CD8-positive, alpha-beta T cell (primary cell): ENCODE measurements at regions of chr17 and their contacts with region 1.

Region 1: GRCh38 chr17:74659898-74660297 is 36.4 kb upstream of the CD300E start:
- DNase-seq: no peak
- ATAC-seq: no peak
- H3K4me3 ChIP-seq: no peak overlapping the region
- H3K4me3 Mint-ChIP-seq: no peak overlapping the region
- H3K27ac ChIP-seq: no peak overlapping the region
- H3K27ac Mint-ChIP-seq: no peak overlapping the region
- H3K4me1 ChIP-seq: no peaks in the 10 kb centered on the region
- H3K4me1 Mint-ChIP-seq: peaks cover 6% of the 10 kb centered on the region
- H3K27me3 ChIP-seq: peaks cover 0 to 8% of the 10 kb centered on the region in 2 experiments
- H3K27me3 Mint-ChIP-seq: peaks cover 39% of the 10 kb centered on the region
- CTCF ChIP-seq: no peak

Region 2: DNA sequence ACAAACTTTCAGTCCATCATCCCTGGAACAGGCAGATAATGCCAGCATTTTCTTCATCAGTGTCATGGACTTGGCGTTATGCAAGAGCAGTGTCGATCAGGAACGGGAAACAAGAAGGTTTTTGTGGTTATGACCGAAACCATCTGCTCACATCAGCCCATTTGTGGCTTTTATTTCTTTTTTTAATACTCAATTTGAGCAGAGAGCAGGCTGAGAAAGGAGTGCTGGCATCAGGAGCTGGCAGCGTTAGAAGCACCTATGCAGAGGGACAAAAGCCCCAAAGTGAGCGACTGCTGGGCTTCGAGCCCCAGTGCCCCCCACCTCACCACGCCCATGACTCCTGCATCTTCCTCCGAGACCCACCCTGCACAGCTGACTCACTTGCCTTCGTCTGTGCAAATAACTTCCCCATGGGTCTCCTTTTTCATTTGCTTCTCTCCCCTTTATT is 20.2 kb before region 1 on chr17:
- CTCF ChIA-PET with region 1: interaction called, 10 read pairs
- POLR2A ChIA-PET with region 1: no interaction called
- intact Hi-C with region 1: no loop called
- DNase-seq: peak in 1 of 9 experiments; percentile 30
- ATAC-seq: no peak
- H3K4me3 ChIP-seq: no peak overlapping the region
- H3K4me3 Mint-ChIP-seq: no peak overlapping the region
- H3K27ac ChIP-seq: no peak overlapping the region
- H3K27ac Mint-ChIP-seq: no peak overlapping the region
- H3K4me1 ChIP-seq: peaks cover 10% of the 10 kb centered on the region
- H3K4me1 Mint-ChIP-seq: peaks cover 7% of the 10 kb centered on the region
- H3K27me3 ChIP-seq: peaks cover 2 to 11% of the 10 kb centered on the region in 2 experiments
- H3K27me3 Mint-ChIP-seq: peaks cover 34% of the 10 kb centered on the region
- CTCF ChIP-seq: no peak

Region 3: GRCh38 chr17:74677558-74678466 is 17.9 kb after region 1 on chr17:
- CTCF ChIA-PET with region 1: interaction called, 48 read pairs
- POLR2A ChIA-PET with region 1: interaction called, 4 read pairs
- intact Hi-C with region 1: no loop called
- DNase-seq: no peak
- ATAC-seq: no peak
- H3K4me3 ChIP-seq: no peak overlapping the region
- H3K4me3 Mint-ChIP-seq: peak overlapping the region; percentile 2
- H3K27ac ChIP-seq: no peak overlapping the region
- H3K27ac Mint-ChIP-seq: peak overlapping the region; percentile 28
- H3K4me1 ChIP-seq: peaks cover 15% of the 10 kb centered on the region
- H3K4me1 Mint-ChIP-seq: peaks cover 20% of the 10 kb centered on the region
- H3K27me3 ChIP-seq: peaks cover 0 to 8% of the 10 kb centered on the region in 2 experiments
- H3K27me3 Mint-ChIP-seq: peaks cover 21% of the 10 kb centered on the region
- CTCF ChIP-seq: no peak

Region 4: GRCh38 chr17:74736513-74737298 is 76.8 kb after region 1 on chr17 and contains the start of gene RAB37:
- CTCF ChIA-PET with region 1: interaction called, 254 read pairs
- POLR2A ChIA-PET with region 1: interaction called, 37 read pairs
- intact Hi-C with region 1: loop called (anchors 1 kb)
- DNase-seq: peak in 8 of 9 experiments; percentile 43 to 81 (median 62)
- ATAC-seq: peak; percentile 30
- H3K4me3 ChIP-seq: peak within 1 kb of the TSS; percentile 65 to 85
- H3K4me3 Mint-ChIP-seq: peak within 1 kb of the TSS; percentile 91
- H3K27ac ChIP-seq: peak within 1 kb of the TSS; percentile 47 to 55
- H3K27ac Mint-ChIP-seq: peak within 1 kb of the TSS; percentile 93
- H3K4me1 ChIP-seq: peaks cover 42% of the 10 kb centered on the region
- H3K4me1 Mint-ChIP-seq: peaks cover 51% of the 10 kb centered on the region
- H3K27me3 ChIP-seq: no peaks in the 10 kb centered on the region
- H3K27me3 Mint-ChIP-seq: no peaks in the 10 kb centered on the region
- CTCF ChIP-seq: peak; percentile 58
- total RNA-seq, gene RAB37: 33.7 to 36.0 TPM

Region 5: DNA sequence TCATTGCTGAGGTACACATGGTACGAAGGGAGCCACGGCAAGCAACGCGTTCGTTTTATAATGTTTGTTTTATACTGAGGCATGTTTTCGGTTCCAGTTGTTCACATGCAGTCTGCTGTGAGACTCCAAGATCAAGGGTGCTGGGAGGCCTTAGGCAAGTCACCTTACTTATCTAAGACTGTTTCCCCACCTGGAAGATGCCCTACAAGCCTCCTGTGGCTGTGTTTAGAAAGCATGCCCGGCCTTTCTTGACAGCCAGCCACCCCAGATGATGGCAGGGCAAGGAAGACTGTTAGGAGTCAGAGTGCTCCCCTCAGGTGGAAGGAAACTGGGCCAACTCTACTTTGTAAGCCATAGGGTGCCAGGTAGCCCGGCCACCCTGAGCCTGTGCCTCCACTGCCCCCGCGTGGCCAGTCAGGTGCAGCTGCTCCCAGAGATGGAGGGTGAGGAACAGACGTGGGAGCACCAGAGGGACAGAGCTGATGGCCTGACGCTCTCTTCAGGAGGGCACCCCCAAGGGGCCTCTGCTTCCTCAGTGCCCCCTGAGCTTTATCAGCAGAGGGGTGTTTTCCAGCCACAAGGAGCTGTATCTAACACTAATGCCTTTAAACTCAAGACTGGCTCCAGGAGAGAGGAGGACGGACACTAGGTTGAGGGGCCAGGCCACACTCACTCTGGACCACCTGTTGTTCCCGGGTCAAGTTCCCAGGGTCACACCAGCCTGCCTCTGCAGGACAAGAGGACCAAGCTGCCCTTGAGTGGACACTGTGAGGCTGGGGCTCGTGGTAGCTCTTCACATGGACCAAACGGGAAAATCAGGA is 110.8 kb after region 1 on chr17:
- CTCF ChIA-PET with region 1: interaction called, 196 read pairs
- POLR2A ChIA-PET with region 1: interaction called, 12 read pairs
- intact Hi-C with region 1: loop called (anchors 1 kb)
- DNase-seq: peak; percentile 62 to 88 (median 78)
- ATAC-seq: peak; percentile 95
- H3K4me3 ChIP-seq: no peak overlapping the region
- H3K4me3 Mint-ChIP-seq: no peak overlapping the region
- H3K27ac ChIP-seq: peak overlapping the region in 1 of 2 experiments; percentile 18
- H3K27ac Mint-ChIP-seq: peak overlapping the region; percentile 81
- H3K4me1 ChIP-seq: peaks cover 21% of the 10 kb centered on the region
- H3K4me1 Mint-ChIP-seq: peaks cover 36% of the 10 kb centered on the region
- H3K27me3 ChIP-seq: no peaks in the 10 kb centered on the region
- H3K27me3 Mint-ChIP-seq: no peaks in the 10 kb centered on the region
- CTCF ChIP-seq: peak; percentile 70

Region 6: DNA sequence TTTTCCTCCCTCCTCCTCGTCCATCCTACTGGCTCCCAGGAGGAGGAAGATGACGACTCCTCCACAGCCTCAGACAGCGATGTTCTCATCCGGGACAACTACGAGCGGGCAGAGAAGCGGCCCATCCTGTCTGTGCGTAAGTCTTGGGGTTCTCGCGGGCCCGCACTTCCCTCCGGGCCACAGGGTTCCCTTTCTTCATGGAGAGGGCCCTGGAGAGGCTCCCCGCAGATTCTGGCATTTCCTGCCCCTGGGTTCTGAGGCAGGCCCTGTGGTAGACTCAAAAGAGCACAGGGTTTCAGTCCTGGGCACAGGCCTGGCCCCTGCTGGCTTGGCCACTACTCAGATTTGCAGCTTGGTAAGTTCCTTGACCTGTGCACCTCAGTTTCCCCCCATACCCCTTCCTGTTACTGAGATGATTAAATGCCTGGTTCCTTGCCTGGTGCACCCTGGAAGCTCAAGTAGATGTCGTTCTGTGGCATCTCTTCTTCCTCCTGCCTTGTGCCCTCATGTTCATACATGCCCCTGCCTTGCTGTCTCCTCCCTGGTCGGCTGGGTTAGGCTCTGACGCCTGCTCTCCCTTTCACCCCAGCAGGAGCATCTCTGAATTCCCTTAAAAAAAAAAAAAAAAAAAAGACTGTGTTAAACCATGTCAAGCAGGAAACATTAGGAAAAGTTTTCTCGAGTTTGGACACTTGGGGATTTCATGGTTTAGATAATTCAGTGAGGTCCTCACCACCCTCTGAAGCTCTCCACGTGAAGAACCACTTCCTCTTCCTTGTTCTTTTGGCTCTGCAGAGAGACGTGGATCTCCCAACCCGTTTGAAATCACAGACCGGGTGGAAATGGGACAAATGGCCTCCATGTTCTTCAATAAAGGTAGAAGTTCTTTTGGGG is 130.5 kb after region 1 on chr17:
- CTCF ChIA-PET with region 1: interaction called, 50 read pairs
- POLR2A ChIA-PET with region 1: no interaction called
- intact Hi-C with region 1: no loop called
- DNase-seq: peak in 1 of 9 experiments; percentile 27
- ATAC-seq: no peak
- H3K4me3 ChIP-seq: peak overlapping the region in 1 of 2 experiments; percentile 5
- H3K4me3 Mint-ChIP-seq: peak overlapping the region; percentile 57
- H3K27ac ChIP-seq: no peak overlapping the region
- H3K27ac Mint-ChIP-seq: peak overlapping the region; percentile 71
- H3K4me1 ChIP-seq: peaks cover 33% of the 10 kb centered on the region
- H3K4me1 Mint-ChIP-seq: peaks cover 40% of the 10 kb centered on the region
- H3K27me3 ChIP-seq: no peaks in the 10 kb centered on the region
- H3K27me3 Mint-ChIP-seq: no peaks in the 10 kb centered on the region
- CTCF ChIP-seq: no peak

Region 7: GRCh38 chr17:74859459-74860228 is 199.7 kb after region 1 on chr17 and contains the start of gene GRIN2C:
- CTCF ChIA-PET with region 1: interaction called, 106 read pairs
- POLR2A ChIA-PET with region 1: no interaction called
- intact Hi-C with region 1: loop called in 1 of 2 experiments (anchors 1 kb)
- DNase-seq: peak in 4 of 9 experiments; percentile 22 to 60 (median 52)
- ATAC-seq: peak; percentile 54
- H3K4me3 ChIP-seq: peak within 1 kb of the TSS; percentile 8
- H3K4me3 Mint-ChIP-seq: peak within 1 kb of the TSS; percentile 64
- H3K27ac ChIP-seq: no peak within 1 kb of the TSS
- H3K27ac Mint-ChIP-seq: no peak within 1 kb of the TSS
- H3K4me1 ChIP-seq: peaks cover 22% of the 10 kb centered on the region
- H3K4me1 Mint-ChIP-seq: peaks cover 16% of the 10 kb centered on the region
- H3K27me3 ChIP-seq: peaks cover 22 to 33% of the 10 kb centered on the region in 2 experiments
- H3K27me3 Mint-ChIP-seq: peaks cover 54% of the 10 kb centered on the region
- CTCF ChIP-seq: peak; percentile 34
- total RNA-seq, gene GRIN2C: not detected